PC-9 (cell line): ENCODE measurements at regions of chr14 and their contacts with region 1.

Region 1: GRCh38 chr14:71117839-71118743 is 210.8 kb downstream of the PCNX1 start:
- DNase-seq: peak; percentile 73 to 99
- H3K4me3 ChIP-seq: peak overlapping the region; percentile 31; the same call in 1 of the 2 replicates
- H3K27ac ChIP-seq: peak overlapping the region; percentile 99
- H3K4me1 ChIP-seq: peaks cover 38% of the 10 kb centered on the region
- H3K27me3 ChIP-seq: no peaks in the 10 kb centered on the region
- CTCF ChIP-seq: no peak

Region 2: DNA sequence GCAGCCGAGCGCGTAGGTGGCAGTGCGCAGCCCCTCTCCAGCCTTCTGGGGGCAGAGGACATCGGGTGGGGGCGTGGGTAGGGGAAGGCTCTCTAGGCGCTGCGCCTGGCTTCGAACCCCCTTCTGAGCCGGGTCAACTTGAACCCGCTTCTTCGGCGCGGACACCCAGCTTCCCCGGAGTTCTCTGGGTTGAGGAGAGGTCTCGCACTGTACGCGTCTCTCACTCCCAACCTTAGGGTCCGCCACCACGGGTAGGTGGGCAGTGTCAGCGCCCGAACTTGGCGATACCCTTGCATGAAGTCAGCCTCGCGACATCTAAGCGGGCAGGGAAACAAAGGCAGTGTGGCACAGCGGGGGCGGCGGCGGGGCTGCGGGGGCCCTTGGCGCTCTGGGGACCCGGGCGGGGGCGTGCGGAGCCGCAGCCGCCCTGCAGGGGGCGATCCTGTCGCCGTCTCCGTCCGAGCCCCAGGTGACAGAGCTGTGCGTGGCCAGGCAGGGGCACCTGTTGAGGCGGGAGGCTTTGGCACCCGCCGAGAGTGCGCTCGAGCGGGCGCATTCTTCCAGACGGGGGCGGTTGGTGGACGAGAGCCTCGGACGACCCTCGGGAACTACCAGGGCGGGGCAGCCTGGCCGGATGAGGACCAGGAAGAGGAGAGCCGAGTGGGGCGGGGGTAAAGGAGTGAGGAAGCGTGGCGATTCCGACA is 1857.1 kb before region 1 on chr14:
- CTCF ChIA-PET with region 1: interaction called, 7 read pairs
- POLR2A ChIA-PET with region 1: interaction called, 10 read pairs
- intact Hi-C with region 1: no loop called
- DNase-seq: peak in 1 of 2 experiments; percentile 48
- H3K4me3 ChIP-seq: no peak overlapping the region
- H3K27ac ChIP-seq: no peak overlapping the region
- H3K4me1 ChIP-seq: no peaks in the 10 kb centered on the region
- H3K27me3 ChIP-seq: peaks cover 20% of the 10 kb centered on the region; the same call in 1 of the 2 replicates
- CTCF ChIP-seq: no peak; the same call in 1 of the 2 replicates

Region 3: DNA sequence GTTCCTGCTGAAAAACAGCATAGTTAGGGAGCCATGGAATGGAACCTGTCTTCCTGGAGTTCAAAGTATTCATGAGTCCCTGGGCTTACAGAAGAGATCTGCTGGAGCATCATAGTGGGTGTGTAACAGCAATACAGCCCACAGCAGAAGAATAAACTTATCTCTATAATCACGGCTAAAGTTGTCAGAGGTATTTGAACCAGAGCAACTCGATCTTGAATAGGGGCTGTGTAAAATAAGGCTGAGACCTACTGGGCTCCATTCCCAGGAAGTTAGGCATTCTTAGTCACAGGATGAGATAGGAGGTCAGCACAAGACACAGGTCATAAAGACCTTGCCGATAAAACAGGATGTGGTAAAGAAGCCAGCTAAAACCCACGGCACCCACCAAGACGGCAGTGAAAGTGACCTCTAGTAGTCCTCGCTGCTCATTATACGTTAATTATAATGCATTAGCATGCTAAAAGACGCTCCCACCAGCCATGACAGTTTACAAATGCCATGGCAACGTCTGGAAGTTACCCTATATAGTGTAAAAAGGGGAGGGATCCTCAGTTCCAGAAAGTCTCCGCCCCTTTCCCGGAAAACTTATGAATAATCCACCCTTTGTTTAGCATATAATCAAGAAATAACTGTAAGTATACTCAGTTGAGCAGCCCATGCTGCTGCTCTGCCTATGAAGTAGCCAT is 12.5 kb after region 1 on chr14:
- CTCF ChIA-PET with region 1: interaction called, 17 read pairs
- POLR2A ChIA-PET with region 1: interaction called, 4 read pairs
- intact Hi-C with region 1: no loop called
- DNase-seq: peak; percentile 55 to 83
- H3K4me3 ChIP-seq: peak overlapping the region; percentile 23; the same call in 1 of the 2 replicates
- H3K27ac ChIP-seq: peak overlapping the region; percentile 74
- H3K4me1 ChIP-seq: peaks cover 20% of the 10 kb centered on the region
- H3K27me3 ChIP-seq: no peaks in the 10 kb centered on the region
- CTCF ChIP-seq: no peak

Region 4: DNA sequence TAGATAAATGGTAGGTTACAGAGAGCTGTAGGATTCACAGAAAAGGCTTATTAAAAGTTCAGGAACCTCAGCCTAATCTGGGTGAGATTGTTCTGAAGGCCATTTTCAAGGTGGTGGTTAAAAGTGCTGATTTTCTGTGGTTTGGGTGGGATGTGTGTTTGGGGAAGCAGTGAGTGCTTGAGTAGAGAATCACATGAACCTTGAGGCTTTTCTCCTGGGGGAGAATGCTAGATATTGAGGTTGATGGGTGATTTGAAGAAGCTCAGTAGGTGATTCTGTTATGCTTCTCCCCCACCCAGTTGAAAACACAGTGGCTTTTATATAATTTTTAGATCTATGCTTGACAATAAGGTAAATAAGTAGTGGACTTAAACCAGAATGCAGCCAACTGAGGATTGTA is 210.1 kb after region 1 on chr14:
- CTCF ChIA-PET with region 1: no interaction called
- POLR2A ChIA-PET with region 1: no interaction called
- intact Hi-C with region 1: no loop called
- DNase-seq: no peak
- H3K4me3 ChIP-seq: no peak overlapping the region
- H3K27ac ChIP-seq: peak overlapping the region; percentile 3; the same call in 1 of the 2 replicates
- H3K4me1 ChIP-seq: peaks cover 26% of the 10 kb centered on the region
- H3K27me3 ChIP-seq: no peaks in the 10 kb centered on the region
- CTCF ChIP-seq: no peak

Region 5: GRCh38 chr14:71553779-71554178 is 435.7 kb after region 1 on chr14:
- CTCF ChIA-PET with region 1: no interaction called
- POLR2A ChIA-PET with region 1: interaction called, 19 read pairs
- intact Hi-C with region 1: no loop called
- DNase-seq: no peak
- H3K4me3 ChIP-seq: no peak overlapping the region
- H3K27ac ChIP-seq: no peak overlapping the region
- H3K4me1 ChIP-seq: peaks cover 8% of the 10 kb centered on the region; the same call in 1 of the 2 replicates
- H3K27me3 ChIP-seq: no peaks in the 10 kb centered on the region
- CTCF ChIP-seq: no peak